MCF 10A (cell line): ENCODE measurements at regions of chr5 and their contacts with region 1.

Region 1: GRCh38 chr5:149442563-149443182 is 63.6 kb upstream of the IL17B start:
- DNase-seq: peak; percentile 88
- H3K4me3 Mint-ChIP-seq: peak overlapping the region; percentile 41
- H3K27ac Mint-ChIP-seq: peak overlapping the region; percentile 84
- H3K4me1 Mint-ChIP-seq: peaks cover 65% of the 10 kb centered on the region
- H3K27me3 Mint-ChIP-seq: no peaks in the 10 kb centered on the region
- CTCF ChIP-seq: peak; percentile 96

Region 2: GRCh38 chr5:149114403-149115312 is 328.0 kb before region 1 on chr5:
- CTCF ChIA-PET with region 1: no interaction called
- POLR2A ChIA-PET with region 1: no interaction called
- intact Hi-C with region 1: no loop called
- DNase-seq: peak; percentile 93
- H3K4me3 Mint-ChIP-seq: no peak overlapping the region
- H3K27ac Mint-ChIP-seq: peak overlapping the region; percentile 65
- H3K4me1 Mint-ChIP-seq: peaks cover 45% of the 10 kb centered on the region
- H3K27me3 Mint-ChIP-seq: no peaks in the 10 kb centered on the region
- CTCF ChIP-seq: peak; percentile 97

Region 3: DNA sequence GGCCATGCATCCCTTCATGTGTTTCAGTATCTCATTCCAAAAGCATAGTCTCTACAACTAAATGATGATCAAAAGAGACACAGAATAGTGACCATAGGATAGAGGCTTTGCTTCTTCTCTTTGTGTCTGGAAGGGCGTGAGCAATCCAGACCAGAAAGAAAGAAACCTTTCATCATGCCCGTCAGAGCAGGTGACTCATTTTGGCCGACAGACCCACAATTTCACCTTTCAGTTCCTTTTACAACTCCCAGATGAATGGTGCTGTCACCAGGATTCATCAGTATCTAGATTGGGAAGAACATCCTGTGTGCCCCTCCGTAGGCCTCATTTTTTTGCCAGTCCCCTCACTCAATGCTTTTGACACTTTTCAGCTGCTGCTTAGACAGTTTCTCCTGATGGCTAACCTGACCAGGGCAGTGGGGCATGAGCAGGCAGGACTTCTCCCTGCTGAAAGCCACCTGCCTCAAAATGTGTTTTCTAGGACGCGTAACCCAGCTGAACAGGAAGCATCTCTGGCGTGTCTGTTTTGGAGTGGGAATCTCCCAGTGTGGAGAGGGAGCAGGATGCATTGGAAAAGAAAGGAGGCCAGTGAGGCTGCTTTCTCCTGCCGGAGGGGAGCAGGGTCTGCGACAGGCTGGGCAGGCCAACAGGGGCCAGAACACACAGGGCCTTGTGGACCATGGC is 280.1 kb before region 1 on chr5:
- CTCF ChIA-PET with region 1: no interaction called
- POLR2A ChIA-PET with region 1: no interaction called
- intact Hi-C with region 1: no loop called
- DNase-seq: peak; percentile 77
- H3K4me3 Mint-ChIP-seq: no peak overlapping the region
- H3K27ac Mint-ChIP-seq: peak overlapping the region; percentile 83
- H3K4me1 Mint-ChIP-seq: peaks cover 69% of the 10 kb centered on the region
- H3K27me3 Mint-ChIP-seq: no peaks in the 10 kb centered on the region
- CTCF ChIP-seq: no peak

Region 4: DNA sequence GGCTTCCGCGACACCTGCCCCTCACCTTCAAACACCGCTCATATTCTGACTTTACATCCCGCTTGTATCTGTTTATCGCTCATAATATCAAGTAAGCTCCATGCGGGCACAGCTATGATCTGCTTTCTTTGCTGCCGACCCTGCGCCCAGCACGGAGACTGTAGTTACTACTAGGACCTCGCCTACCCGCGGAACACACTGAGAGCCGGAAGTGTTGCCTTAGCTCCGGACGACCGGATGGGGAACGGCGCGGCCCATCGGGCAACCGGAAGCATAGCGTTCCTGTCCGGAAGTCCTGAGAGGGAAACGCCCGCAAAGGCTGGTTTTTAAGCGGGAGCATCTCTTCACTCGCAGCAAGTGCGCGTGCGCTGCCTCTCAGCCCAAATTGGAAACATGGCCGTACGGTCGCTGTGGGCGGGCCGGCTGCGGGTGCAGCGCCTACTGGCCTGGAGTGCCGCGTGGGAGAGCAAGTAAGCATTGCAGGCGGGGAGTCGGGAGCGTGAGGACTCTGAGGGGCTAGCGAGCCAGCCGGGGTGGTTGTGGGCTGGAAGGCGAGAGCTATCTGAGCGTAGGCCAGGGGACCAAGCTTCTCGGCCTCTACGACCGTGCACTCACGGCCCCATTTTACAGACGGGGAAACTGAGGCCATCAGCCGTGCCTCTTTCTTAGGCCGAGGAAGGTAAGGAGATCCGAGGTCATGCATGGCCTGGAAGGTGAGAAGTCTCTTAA is 97.4 kb before region 1 on chr5 and contains the start of gene GRPEL2:
- CTCF ChIA-PET with region 1: no interaction called
- POLR2A ChIA-PET with region 1: interaction called, 13 read pairs
- intact Hi-C with region 1: no loop called
- DNase-seq: peak; percentile 99
- H3K4me3 Mint-ChIP-seq: peak within 1 kb of the TSS; percentile 96
- H3K27ac Mint-ChIP-seq: peak within 1 kb of the TSS; percentile 94
- H3K4me1 Mint-ChIP-seq: peaks cover 22% of the 10 kb centered on the region
- H3K27me3 Mint-ChIP-seq: no peaks in the 10 kb centered on the region
- CTCF ChIP-seq: no peak
- total RNA-seq, gene GRPEL2: 69.5 and 86.6 TPM in 2 replicates

Region 5: DNA sequence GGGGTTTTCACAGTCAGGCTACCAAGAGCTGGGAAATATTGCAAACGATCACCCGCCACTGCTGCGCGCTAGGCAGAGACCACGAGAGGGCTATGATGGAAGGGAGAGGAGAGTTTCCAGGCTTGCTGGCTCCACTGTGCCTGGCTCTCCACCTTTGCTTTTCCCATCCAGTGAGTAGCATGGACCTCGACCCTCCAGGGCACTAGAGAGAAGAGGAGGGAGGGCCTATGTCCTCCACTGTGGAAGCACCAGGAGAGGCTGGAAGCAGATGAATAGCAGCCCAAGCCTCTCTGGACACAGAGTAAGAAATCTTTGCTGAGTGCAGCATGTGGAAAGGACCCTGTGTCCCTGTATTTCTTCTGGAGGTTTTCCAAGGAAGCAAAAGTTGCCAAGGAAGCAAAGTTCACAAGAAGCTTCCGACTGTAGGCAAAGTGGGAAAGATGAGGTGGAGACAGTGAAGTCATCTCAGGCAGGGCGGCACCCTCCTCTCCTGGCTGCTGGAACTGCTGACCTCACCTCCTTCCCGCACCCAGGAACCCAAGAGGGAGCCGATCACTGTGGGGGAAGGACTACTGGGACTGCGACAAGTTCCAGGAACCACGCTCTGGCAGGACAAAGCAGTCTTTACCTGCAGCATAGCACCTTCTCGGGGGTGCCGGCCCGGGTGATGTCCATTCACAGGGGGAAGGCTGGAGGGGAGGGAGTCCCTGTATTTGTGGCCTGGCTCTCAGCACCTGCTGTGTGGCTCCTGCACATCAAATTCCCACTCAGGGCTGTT is 28.9 kb after region 1 on chr5:
- CTCF ChIA-PET with region 1: interaction called, 78 read pairs
- POLR2A ChIA-PET with region 1: interaction called, 1,058 read pairs
- intact Hi-C with region 1: no loop called
- DNase-seq: peak; percentile 63
- H3K4me3 Mint-ChIP-seq: no peak overlapping the region
- H3K27ac Mint-ChIP-seq: peak overlapping the region; percentile 64
- H3K4me1 Mint-ChIP-seq: peaks cover 28% of the 10 kb centered on the region
- H3K27me3 Mint-ChIP-seq: no peaks in the 10 kb centered on the region
- CTCF ChIP-seq: no peak

Region 6: GRCh38 chr5:149497357-149497756 is 54.7 kb after region 1 on chr5:
- CTCF ChIA-PET with region 1: interaction called, 27 read pairs
- POLR2A ChIA-PET with region 1: interaction called, 38 read pairs
- intact Hi-C with region 1: no loop called
- DNase-seq: no peak
- H3K4me3 Mint-ChIP-seq: no peak overlapping the region
- H3K27ac Mint-ChIP-seq: peak overlapping the region; percentile 14
- H3K4me1 Mint-ChIP-seq: no peaks in the 10 kb centered on the region
- H3K27me3 Mint-ChIP-seq: no peaks in the 10 kb centered on the region
- CTCF ChIP-seq: no peak

Region 7: DNA sequence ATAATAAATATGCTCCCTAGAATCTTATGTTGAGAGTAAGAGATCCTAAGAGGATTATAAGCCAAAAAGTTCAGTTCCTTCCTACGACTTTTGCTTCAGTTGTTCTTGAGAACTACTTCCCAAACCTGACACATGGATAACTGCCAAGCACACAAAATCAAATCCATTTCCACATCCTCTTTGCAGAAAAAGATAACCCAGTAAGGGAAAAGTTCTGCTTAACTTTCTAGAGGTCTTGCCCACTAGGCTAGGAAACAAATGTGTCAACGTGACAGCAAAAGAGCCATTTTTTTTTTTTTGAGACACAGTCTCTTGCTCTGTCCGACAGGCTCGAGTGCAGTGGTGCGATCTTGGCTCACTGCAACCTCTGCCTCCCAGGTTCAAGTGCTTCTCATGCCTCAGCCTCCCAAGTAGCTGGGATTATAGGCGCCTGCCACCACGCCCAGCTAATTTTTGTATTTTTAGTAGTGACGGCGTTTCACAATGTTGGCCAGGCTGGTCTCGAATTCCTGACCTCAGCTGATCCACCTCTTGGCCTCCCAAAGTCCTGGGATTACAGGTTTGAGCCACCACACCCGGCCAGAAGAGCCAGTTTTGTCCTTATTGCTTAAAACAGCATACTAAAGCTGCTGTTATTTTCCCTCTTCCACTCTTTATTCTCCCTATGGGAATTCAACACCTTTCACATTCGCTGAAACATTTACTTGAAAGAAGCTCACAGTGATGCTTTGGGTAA is 84.3 kb after region 1 on chr5:
- CTCF ChIA-PET with region 1: interaction called, 43 read pairs
- POLR2A ChIA-PET with region 1: interaction called, 13 read pairs
- intact Hi-C with region 1: no loop called
- DNase-seq: no peak
- H3K4me3 Mint-ChIP-seq: no peak overlapping the region
- H3K27ac Mint-ChIP-seq: peak overlapping the region; percentile 46
- H3K4me1 Mint-ChIP-seq: peaks cover 62% of the 10 kb centered on the region
- H3K27me3 Mint-ChIP-seq: no peaks in the 10 kb centered on the region
- CTCF ChIP-seq: no peak

Region 8: DNA sequence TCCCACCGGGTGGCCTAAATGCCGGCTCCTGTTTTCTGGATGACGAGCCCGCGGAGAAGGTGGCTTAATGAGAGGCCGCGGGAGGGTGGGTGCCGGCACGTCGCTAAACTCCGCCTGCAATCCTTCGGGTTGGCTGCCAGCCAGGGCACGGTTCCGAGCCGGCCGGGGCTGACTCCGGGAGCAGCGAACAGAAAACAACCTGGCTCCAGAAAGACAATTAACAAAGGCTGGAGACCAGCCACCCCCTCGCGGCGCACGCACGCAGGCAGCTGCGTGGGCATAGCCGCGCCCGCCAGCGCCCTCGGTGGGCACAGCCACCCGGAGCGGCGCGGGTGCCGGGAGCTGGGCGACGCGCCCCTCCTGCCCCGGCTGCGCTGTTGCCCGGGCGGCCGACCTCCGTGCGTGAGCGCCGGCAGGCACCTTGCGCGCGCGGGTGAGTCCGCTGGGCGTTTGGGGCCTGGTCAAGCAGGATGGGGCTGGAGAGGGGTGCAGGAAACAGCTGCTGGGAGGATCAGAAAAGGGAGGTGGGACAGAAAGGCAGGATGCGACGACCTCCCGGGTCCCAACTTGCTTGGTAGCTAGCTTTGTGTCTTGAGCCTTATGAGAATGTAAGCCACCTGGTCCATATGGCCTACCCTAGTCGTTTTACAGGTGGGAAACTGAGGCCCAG is 138.7 kb after region 1 on chr5 and contains the start of gene ARHGEF37:
- CTCF ChIA-PET with region 1: interaction called, 9 read pairs
- POLR2A ChIA-PET with region 1: interaction called, 21 read pairs
- intact Hi-C with region 1: no loop called
- DNase-seq: peak; percentile 83
- H3K4me3 Mint-ChIP-seq: peak within 1 kb of the TSS; percentile 75
- H3K27ac Mint-ChIP-seq: peak within 1 kb of the TSS; percentile 76
- H3K4me1 Mint-ChIP-seq: peaks cover 26% of the 10 kb centered on the region
- H3K27me3 Mint-ChIP-seq: no peaks in the 10 kb centered on the region
- CTCF ChIP-seq: no peak
- total RNA-seq, gene ARHGEF37: 3.9 and 5.1 TPM in 2 replicates